IMR-90 (cell line): ENCODE measurements at regions of chr19 and their contacts with region 1.

Region 1: DNA sequence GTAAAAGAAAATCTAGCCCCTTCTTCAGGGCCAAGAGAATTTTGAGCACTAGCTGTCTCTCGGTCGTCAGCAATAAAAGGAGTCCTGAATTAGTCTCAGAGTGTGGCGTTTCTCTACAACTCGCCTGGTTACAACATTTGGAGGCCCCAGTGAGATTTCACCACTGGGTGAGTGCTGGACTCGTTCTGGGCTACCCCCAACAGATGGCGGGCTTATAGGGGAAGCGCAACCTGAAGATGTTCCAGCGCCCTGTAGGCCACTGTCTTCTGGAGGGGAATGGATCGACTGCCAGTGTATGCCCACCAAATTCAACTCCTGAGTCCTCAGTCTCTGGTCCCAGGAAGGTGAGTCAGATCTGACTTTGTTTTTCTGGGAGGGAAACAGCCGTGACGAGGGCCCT is 11.7 kb upstream of the ZNF181 start:
- DNase-seq: no peak
- ATAC-seq: no peak
- H3K4me3 ChIP-seq: no peak overlapping the region
- H3K27ac ChIP-seq: no peak overlapping the region
- H3K4me1 ChIP-seq: no peaks in the 10 kb centered on the region
- H3K27me3 ChIP-seq: peaks cover 5% of the 10 kb centered on the region
- CTCF ChIP-seq: no peak
- POLR2A ChIP-seq: no peak
- RAD21 ChIP-seq: no peak

Region 2: GRCh38 chr19:34943861-34944573 is 221.7 kb after region 1 on chr19:
- CTCF ChIA-PET with region 1: no interaction called
- POLR2A ChIA-PET with region 1: interaction called, 11 read pairs
- dilution Hi-C with region 1: no loop called
- in situ Hi-C with region 1: no loop called
- intact Hi-C with region 1: no loop called
- DNase-seq: no peak
- ATAC-seq: no peak
- H3K4me3 ChIP-seq: no peak overlapping the region
- H3K27ac ChIP-seq: no peak overlapping the region
- H3K4me1 ChIP-seq: no peaks in the 10 kb centered on the region
- H3K27me3 ChIP-seq: no peaks in the 10 kb centered on the region
- CTCF ChIP-seq: no peak
- POLR2A ChIP-seq: no peak
- RAD21 ChIP-seq: no peak

Region 3: GRCh38 chr19:35005256-35005977 is 283.1 kb after region 1 on chr19:
- CTCF ChIA-PET with region 1: interaction called, 12 read pairs
- POLR2A ChIA-PET with region 1: no interaction called
- dilution Hi-C with region 1: no loop called
- in situ Hi-C with region 1: no loop called
- intact Hi-C with region 1: no loop called
- DNase-seq: no peak
- ATAC-seq: no peak
- H3K4me3 ChIP-seq: no peak overlapping the region
- H3K27ac ChIP-seq: peak overlapping the region; percentile 15; the same call in 1 of the 2 replicates
- H3K4me1 ChIP-seq: peaks cover 19% of the 10 kb centered on the region
- H3K27me3 ChIP-seq: no peaks in the 10 kb centered on the region
- CTCF ChIP-seq: no peak
- POLR2A ChIP-seq: no peak
- RAD21 ChIP-seq: no peak

Region 4: DNA sequence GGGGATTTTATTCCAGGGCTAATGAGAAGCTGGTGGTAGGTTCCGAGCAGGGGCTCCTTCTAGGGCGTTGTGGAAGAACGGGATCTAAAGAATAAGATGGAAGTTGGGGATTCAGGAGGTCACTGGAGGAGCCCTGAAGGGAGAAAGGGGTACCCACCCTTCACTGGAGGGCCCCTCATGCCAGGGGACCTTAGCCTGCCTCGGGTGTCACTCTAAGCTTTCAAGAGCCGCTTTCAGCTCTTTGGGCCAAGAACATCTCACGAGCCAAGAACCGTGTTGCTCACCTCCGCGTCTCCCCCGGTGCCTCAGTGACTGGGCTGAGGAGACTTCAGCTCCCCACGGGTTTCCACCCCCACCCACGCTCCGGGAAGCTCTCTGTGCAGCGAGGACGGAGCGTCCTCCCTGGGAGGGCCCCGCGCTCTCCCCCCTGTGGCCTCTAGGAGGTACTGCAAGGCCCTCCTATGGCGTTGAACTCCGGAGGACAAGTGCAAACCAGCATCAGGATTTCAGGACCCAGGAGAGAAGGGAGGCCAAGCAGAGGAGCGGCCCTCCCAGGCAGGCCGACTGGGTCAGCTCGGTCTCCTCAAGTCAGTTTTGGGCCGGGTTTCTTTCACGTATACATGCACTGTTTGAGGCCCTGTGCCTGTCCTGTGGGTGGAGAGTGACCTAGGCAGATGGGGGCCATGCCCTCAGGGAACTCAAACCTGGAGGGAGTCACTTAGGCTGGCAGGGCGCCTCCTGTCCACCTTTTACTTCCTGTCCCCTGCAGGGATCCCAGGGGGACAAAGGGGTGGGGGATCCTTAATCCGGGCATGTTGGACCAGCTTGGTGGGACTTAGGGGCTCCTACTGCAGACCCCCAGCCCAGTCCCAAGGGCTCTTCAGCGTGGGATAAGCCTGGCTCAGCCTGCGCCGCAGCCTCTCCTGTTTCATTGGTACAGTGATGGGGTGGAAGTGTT is 773.0 kb after region 1 on chr19:
- CTCF ChIA-PET with region 1: no interaction called
- POLR2A ChIA-PET with region 1: no interaction called
- dilution Hi-C with region 1: no loop called
- in situ Hi-C with region 1: no loop called
- intact Hi-C with region 1: no loop called
- DNase-seq: peak; percentile 55
- ATAC-seq: peak; percentile 100
- H3K4me3 ChIP-seq: no peak overlapping the region
- H3K27ac ChIP-seq: no peak overlapping the region
- H3K4me1 ChIP-seq: no peaks in the 10 kb centered on the region
- H3K27me3 ChIP-seq: peaks cover 36% of the 10 kb centered on the region
- CTCF ChIP-seq: peak; percentile 88
- POLR2A ChIP-seq: no peak
- RAD21 ChIP-seq: peak; percentile 70